Motor neuron (in vitro differentiated cells): ENCODE measurements at regions of chr12 and their contacts with region 1.

Region 1: GRCh38 chr12:108099073-108099472 is 30.0 kb upstream of the WSCD2 start:
- ATAC-seq: peak in 2 of 8 experiments; percentile 8 to 12
- H3K4me3 ChIP-seq: no peak overlapping the region
- H3K27ac ChIP-seq: no peak overlapping the region
- H3K4me1 ChIP-seq: peaks cover 12% of the 10 kb centered on the region in 2 donors

Region 2: DNA sequence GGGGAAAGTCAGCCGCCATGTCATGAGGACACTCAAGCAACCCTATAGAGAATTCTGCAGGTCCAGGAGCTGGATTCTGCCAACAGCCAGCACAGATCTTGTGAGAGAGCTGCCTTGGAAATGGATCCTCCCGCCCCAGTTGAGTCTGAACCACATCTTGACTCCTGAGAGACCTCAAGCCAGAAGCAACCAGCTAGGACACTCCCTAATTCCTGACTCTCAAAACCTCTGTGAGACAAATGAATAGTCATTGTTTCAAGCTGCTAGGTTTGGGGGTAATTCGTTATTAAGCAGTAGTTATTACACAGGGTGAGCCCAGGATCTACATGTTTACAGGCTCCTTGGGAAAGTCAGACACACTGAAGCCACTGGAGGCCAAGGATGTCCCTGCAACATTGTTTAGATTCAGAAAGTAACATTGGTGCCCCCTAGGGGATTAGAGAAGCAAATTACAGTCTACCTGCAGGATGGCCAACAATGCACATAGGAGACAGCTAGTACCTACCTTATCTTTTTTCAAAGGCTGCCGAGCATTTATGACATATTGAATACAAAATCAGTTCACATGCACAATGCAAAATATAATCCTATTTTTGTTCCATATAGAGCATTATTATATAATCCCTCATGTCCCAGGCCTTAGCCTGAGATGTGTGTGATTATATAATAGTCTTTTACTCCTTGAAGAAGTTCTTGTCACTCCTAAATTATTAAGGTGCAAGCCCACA is 358.1 kb after region 1 on chr12:
- in situ Hi-C with region 1: loop called in 1 of 9 experiments (anchors 25 kb)
- ATAC-seq: peak; percentile 83 to 95 (median 92)
- H3K4me3 ChIP-seq: no peak overlapping the region
- H3K27ac ChIP-seq: no peak overlapping the region
- H3K4me1 ChIP-seq: peaks cover 8 to 11% of the 10 kb centered on the region in 2 donors

Region 3: DNA sequence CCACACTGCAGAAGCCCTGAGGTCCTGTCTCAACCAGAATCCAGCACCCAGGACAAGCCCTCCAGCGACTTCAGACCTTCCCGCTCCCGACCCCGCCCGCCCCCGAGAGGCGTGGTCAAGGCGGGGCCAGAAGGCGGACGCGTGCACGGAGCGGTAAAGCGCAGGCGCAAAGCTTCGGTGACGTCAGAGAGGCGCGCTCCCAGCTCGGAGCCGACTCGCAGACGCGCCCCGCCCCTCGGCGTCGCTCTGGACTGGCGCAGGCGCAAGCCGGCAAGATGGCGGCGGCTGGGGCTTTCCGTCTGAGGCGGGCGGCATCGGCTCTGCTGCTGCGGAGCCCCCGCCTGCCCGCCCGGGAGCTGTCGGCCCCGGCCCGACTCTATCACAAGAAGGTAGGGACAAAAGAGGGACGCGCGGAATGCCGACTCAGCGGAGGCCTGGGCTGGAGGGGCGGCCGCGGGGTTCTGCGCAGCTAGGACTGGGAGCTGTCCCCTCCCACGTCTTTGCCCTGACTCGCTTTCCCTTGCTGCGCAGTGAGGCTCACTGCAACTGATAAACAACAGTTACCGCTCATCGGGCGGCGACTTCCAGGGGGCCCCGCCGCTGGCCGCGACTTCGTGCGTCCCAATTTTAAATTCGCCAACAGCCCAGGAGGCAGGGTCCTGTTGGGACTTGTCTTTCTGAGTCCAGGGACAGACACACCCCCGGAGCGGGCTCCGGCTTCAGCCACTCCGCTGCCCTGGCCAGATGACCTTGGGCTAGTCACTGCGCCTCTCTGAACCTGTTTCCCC is 463.5 kb after region 1 on chr12 and contains the start of gene ISCU:
- in situ Hi-C with region 1: no loop called
- ATAC-seq: peak; percentile 59 to 89 (median 84)
- H3K4me3 ChIP-seq: peak within 1 kb of the TSS; percentile 86 to 96 (median 88)
- H3K27ac ChIP-seq: peak within 1 kb of the TSS; percentile 91 to 98
- H3K4me1 ChIP-seq: peaks cover 9 to 10% of the 10 kb centered on the region in 2 donors
- total RNA-seq, gene ISCU: 74.4 to 244 (median 90.2) TPM